CD4-positive, alpha-beta T cell (primary cell): ENCODE measurements at regions of chr6 and their contacts with region 1.

Region 1: GRCh38 chr6:26234421-26235296 is 130.3 kb upstream of the BTN3A2 start:
- DNase-seq: peak; percentile 46 to 96 (median 67)
- ATAC-seq: peak; percentile 73
- H3K4me3 ChIP-seq: peak overlapping the region; percentile 66
- H3K4me3 Mint-ChIP-seq: peak overlapping the region; percentile 100
- H3K27ac ChIP-seq: peak overlapping the region; percentile 78 to 87
- H3K27ac Mint-ChIP-seq: peak overlapping the region; percentile 99
- H3K4me1 ChIP-seq: peaks cover 19% of the 10 kb centered on the region
- H3K4me1 Mint-ChIP-seq: peaks cover 42% of the 10 kb centered on the region
- H3K27me3 ChIP-seq: no peaks in the 10 kb centered on the region
- H3K27me3 Mint-ChIP-seq: peaks cover 8% of the 10 kb centered on the region
- CTCF ChIP-seq: no peak

Region 2: GRCh38 chr6:25107218-25107617 is 1127.4 kb before region 1 on chr6:
- CTCF ChIA-PET with region 1: no interaction called
- POLR2A ChIA-PET with region 1: no interaction called
- intact Hi-C with region 1: no loop called
- DNase-seq: no peak
- ATAC-seq: no peak
- H3K4me3 ChIP-seq: no peak overlapping the region
- H3K4me3 Mint-ChIP-seq: no peak overlapping the region
- H3K27ac ChIP-seq: no peak overlapping the region
- H3K27ac Mint-ChIP-seq: no peak overlapping the region
- H3K4me1 ChIP-seq: no peaks in the 10 kb centered on the region
- H3K4me1 Mint-ChIP-seq: peaks cover 1% of the 10 kb centered on the region
- H3K27me3 ChIP-seq: no peaks in the 10 kb centered on the region
- H3K27me3 Mint-ChIP-seq: no peaks in the 10 kb centered on the region
- CTCF ChIP-seq: no peak

Region 3: DNA sequence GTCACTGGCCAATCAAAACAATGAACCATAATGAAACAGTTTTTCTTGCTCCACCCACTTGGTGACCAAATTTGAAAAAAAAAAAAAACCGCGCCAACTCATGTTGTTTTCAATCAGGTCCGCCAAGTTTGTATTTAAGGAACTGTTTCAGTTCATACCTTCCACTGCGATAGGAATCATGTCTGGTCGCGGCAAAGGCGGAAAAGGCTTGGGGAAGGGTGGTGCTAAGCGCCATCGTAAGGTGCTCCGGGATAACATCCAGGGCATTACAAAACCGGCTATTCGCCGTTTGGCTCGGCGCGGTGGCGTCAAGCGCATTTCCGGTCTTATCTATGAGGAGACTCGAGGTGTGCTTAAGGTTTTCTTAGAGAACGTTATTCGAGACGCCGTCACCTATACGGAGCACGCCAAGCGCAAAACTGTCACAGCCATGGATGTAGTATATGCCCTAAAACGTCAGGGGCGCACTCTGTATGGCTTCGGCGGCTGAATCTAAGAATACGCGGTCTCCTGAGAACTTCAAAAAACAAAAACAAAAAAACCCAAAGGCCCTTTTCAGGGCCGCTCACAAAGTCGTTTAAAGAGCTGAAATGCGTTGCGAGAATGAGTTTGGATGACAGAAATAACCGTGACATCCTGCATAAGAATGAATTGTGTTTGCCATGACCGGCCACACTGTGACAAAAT is 130.7 kb before region 1 on chr6:
- CTCF ChIA-PET with region 1: no interaction called
- POLR2A ChIA-PET with region 1: interaction called, 22 read pairs
- intact Hi-C with region 1: no loop called
- DNase-seq: peak; percentile 84 to 96 (median 90)
- ATAC-seq: peak; percentile 88
- H3K4me3 ChIP-seq: peak overlapping the region; percentile 58
- H3K4me3 Mint-ChIP-seq: peak overlapping the region; percentile 94
- H3K27ac ChIP-seq: peak overlapping the region; percentile 83 to 85
- H3K27ac Mint-ChIP-seq: peak overlapping the region; percentile 99
- H3K4me1 ChIP-seq: peaks cover 16% of the 10 kb centered on the region
- H3K4me1 Mint-ChIP-seq: peaks cover 13% of the 10 kb centered on the region
- H3K27me3 ChIP-seq: no peaks in the 10 kb centered on the region
- H3K27me3 Mint-ChIP-seq: peaks cover 5% of the 10 kb centered on the region
- CTCF ChIP-seq: peak; percentile 58

Region 4: GRCh38 chr6:26204332-26205165 is 30.1 kb before region 1 on chr6:
- CTCF ChIA-PET with region 1: interaction called, 10 read pairs
- POLR2A ChIA-PET with region 1: interaction called, 637 read pairs
- intact Hi-C with region 1: loop called in 1 of 2 experiments (anchors 2 kb)
- DNase-seq: peak; percentile 73 to 98 (median 80)
- ATAC-seq: peak; percentile 69
- H3K4me3 ChIP-seq: peak overlapping the region; percentile 68
- H3K4me3 Mint-ChIP-seq: no peak overlapping the region
- H3K27ac ChIP-seq: peak overlapping the region; percentile 89 to 90
- H3K27ac Mint-ChIP-seq: no peak overlapping the region
- H3K4me1 ChIP-seq: peaks cover 34% of the 10 kb centered on the region
- H3K4me1 Mint-ChIP-seq: peaks cover 8% of the 10 kb centered on the region
- H3K27me3 ChIP-seq: no peaks in the 10 kb centered on the region
- H3K27me3 Mint-ChIP-seq: no peaks in the 10 kb centered on the region
- CTCF ChIP-seq: peak; percentile 32

Region 5: GRCh38 chr6:26285143-26286134 is 50.8 kb after region 1 on chr6:
- CTCF ChIA-PET with region 1: interaction called, 4 read pairs
- POLR2A ChIA-PET with region 1: interaction called, 133 read pairs
- intact Hi-C with region 1: no loop called
- DNase-seq: peak; percentile 85 to 99 (median 92)
- ATAC-seq: peak; percentile 82
- H3K4me3 ChIP-seq: peak overlapping the region; percentile 62
- H3K4me3 Mint-ChIP-seq: peak overlapping the region; percentile 87
- H3K27ac ChIP-seq: peak overlapping the region; percentile 82 to 85
- H3K27ac Mint-ChIP-seq: peak overlapping the region; percentile 96
- H3K4me1 ChIP-seq: peaks cover 16% of the 10 kb centered on the region
- H3K4me1 Mint-ChIP-seq: peaks cover 24% of the 10 kb centered on the region
- H3K27me3 ChIP-seq: no peaks in the 10 kb centered on the region
- H3K27me3 Mint-ChIP-seq: peaks cover 11% of the 10 kb centered on the region
- CTCF ChIP-seq: no peak

Region 6: GRCh38 chr6:26473758-26474438 is 239.2 kb after region 1 on chr6:
- CTCF ChIA-PET with region 1: no interaction called
- POLR2A ChIA-PET with region 1: interaction called, 10 read pairs
- intact Hi-C with region 1: no loop called
- DNase-seq: peak; percentile 60 to 96 (median 76)
- ATAC-seq: peak; percentile 91
- H3K4me3 ChIP-seq: peak overlapping the region; percentile 56
- H3K4me3 Mint-ChIP-seq: peak overlapping the region; percentile 94
- H3K27ac ChIP-seq: peak overlapping the region; percentile 85 to 90
- H3K27ac Mint-ChIP-seq: peak overlapping the region; percentile 99
- H3K4me1 ChIP-seq: peaks cover 45% of the 10 kb centered on the region
- H3K4me1 Mint-ChIP-seq: peaks cover 64% of the 10 kb centered on the region
- H3K27me3 ChIP-seq: no peaks in the 10 kb centered on the region
- H3K27me3 Mint-ChIP-seq: no peaks in the 10 kb centered on the region
- CTCF ChIP-seq: no peak

Region 7: DNA sequence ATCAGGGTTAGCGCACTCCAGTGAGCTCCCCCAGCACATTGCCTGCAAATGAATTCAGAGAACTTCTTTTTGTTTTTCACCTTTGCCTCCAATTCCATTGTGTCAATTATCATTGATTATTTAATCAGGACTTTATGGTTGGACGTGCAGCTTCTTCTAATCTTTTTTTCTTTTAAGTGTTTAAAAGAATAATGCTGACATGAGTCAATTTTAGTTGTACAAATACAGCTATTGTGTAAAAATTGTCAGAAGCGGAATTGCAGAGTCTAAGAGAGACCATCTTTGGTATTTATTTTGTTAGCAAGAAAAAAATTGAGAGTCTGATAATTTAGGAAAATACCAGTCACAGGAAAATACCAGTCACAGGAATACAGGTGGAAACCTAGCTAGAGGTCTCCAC is 367.6 kb after region 1 on chr6:
- CTCF ChIA-PET with region 1: no interaction called
- POLR2A ChIA-PET with region 1: no interaction called
- intact Hi-C with region 1: no loop called
- DNase-seq: no peak
- ATAC-seq: no peak
- H3K4me3 ChIP-seq: no peak overlapping the region
- H3K4me3 Mint-ChIP-seq: no peak overlapping the region
- H3K27ac ChIP-seq: no peak overlapping the region
- H3K27ac Mint-ChIP-seq: no peak overlapping the region
- H3K4me1 ChIP-seq: peaks cover 15% of the 10 kb centered on the region
- H3K4me1 Mint-ChIP-seq: peaks cover 21% of the 10 kb centered on the region
- H3K27me3 ChIP-seq: no peaks in the 10 kb centered on the region
- H3K27me3 Mint-ChIP-seq: no peaks in the 10 kb centered on the region
- CTCF ChIP-seq: no peak

Region 8: DNA sequence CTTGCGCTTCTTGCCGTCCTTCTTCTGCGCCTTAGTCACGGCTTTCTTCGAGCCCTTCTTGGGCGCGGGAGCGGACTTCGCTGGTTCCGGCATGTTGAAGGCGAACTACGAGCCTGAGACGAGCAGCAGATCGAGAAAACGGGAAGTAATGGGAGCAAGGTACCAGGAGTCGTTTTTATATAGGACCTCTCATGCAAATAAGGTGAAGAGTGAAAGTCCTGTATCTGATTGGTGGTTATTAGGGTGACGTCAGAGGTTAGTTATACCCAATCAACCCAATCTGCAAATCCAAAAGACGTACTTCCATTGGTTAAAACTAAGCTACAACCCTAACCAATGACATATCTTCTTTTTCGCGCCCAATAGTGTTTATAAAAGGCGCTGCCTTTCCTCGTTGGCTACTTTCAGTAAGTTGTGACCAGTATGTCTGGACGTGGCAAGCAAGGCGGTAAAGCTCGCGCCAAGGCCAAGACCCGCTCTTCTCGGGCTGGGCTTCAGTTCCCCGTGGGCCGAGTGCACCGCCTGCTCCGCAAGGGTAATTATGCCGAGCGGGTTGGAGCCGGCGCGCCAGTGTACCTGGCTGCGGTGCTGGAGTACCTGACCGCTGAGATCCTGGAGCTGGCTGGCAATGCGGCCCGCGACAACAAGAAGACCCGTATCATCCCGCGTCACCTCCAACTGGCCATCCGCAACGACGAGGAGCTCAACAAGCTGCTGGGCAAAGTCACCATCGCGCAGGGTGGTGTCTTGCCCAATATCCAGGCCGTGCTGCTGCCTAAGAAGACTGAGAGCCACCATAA is 912.2 kb after region 1 on chr6:
- CTCF ChIA-PET with region 1: no interaction called
- POLR2A ChIA-PET with region 1: interaction called, 55 read pairs
- intact Hi-C with region 1: no loop called
- DNase-seq: peak; percentile 61 to 99 (median 72)
- ATAC-seq: peak; percentile 86
- H3K4me3 ChIP-seq: peak overlapping the region; percentile 69
- H3K4me3 Mint-ChIP-seq: no peak overlapping the region
- H3K27ac ChIP-seq: peak overlapping the region; percentile 84 to 97
- H3K27ac Mint-ChIP-seq: no peak overlapping the region
- H3K4me1 ChIP-seq: peaks cover 17% of the 10 kb centered on the region
- H3K4me1 Mint-ChIP-seq: peaks cover 11% of the 10 kb centered on the region
- H3K27me3 ChIP-seq: no peaks in the 10 kb centered on the region
- H3K27me3 Mint-ChIP-seq: no peaks in the 10 kb centered on the region
- CTCF ChIP-seq: no peak